IMR-90 (cell line): ENCODE measurements at regions of chr6 and their contacts with region 1.

Region 1: DNA sequence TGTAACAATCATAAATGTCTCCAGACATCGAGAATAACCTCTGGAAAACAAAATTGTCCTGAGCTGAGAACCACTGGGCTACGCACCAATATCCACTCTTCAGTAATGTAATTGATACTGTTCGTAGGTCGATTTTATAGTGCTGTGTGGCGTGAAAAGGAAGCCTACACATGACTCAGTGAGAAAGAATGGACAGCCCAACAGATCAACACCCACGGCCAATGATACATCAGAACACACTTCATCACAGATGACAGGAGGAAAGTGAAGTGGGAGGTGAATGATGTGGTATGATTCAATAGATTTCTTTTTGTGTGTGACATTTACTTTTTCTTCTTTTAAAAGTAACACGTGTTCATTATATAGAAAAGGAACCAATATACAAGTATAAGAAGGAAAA is 93.5 kb downstream of the RPS12 start:
- DNase-seq: peak; percentile 93
- ATAC-seq: peak; percentile 79
- H3K4me3 ChIP-seq: no peak overlapping the region
- H3K27ac ChIP-seq: no peak overlapping the region
- H3K4me1 ChIP-seq: peaks cover 11% of the 10 kb centered on the region
- H3K27me3 ChIP-seq: no peaks in the 10 kb centered on the region
- CTCF ChIP-seq: no peak
- POLR2A ChIP-seq: no peak
- RAD21 ChIP-seq: no peak

Region 2: GRCh38 chr6:132730560-132730959 is 177.4 kb before region 1 on chr6:
- CTCF ChIA-PET with region 1: no interaction called
- POLR2A ChIA-PET with region 1: no interaction called
- dilution Hi-C with region 1: no loop called
- in situ Hi-C with region 1: no loop called
- intact Hi-C with region 1: no loop called
- DNase-seq: peak; percentile 94
- ATAC-seq: peak; percentile 88
- H3K4me3 ChIP-seq: no peak overlapping the region
- H3K27ac ChIP-seq: no peak overlapping the region
- H3K4me1 ChIP-seq: peaks cover 18% of the 10 kb centered on the region
- H3K27me3 ChIP-seq: no peaks in the 10 kb centered on the region
- CTCF ChIP-seq: no peak
- POLR2A ChIP-seq: no peak
- RAD21 ChIP-seq: no peak

Region 3: DNA sequence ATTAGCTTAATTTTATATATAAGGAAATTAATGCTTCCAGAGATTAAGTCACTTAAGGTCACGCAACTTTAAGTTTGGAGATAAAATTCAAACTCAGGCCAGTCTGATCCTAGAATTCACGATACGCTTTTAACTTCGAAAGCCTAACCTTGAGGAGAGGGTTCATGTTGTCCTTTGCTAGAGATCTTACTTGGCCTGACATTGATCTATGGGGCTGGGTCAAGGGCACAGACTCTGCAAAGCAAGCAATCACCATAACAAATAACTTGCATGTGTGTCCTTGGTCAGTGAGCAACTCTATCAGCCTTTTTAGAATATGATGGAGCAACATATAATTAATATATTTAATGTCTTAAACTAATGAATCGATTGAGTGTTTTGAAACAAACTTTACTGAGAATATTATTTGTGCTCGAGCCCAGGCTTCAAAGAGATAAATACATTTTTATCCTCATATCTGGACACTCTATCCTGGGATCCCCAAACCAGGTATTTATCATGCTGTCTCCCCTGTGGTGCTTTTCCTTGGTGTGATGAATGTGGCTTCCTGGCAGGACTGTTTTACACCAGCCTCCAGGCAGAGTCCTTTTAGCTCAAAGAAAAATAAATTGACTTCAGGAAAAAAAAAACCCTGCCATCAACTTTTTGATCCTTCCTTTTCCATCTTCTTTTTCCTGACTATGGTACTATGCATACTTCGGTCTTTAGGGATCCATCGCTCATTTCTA is 64.4 kb before region 1 on chr6:
- CTCF ChIA-PET with region 1: no interaction called
- POLR2A ChIA-PET with region 1: no interaction called
- dilution Hi-C with region 1: no loop called
- in situ Hi-C with region 1: no loop called
- intact Hi-C with region 1: no loop called
- DNase-seq: no peak
- ATAC-seq: no peak
- H3K4me3 ChIP-seq: no peak overlapping the region
- H3K27ac ChIP-seq: no peak overlapping the region
- H3K4me1 ChIP-seq: no peaks in the 10 kb centered on the region; the same call in 1 of the 2 replicates
- H3K27me3 ChIP-seq: no peaks in the 10 kb centered on the region
- CTCF ChIP-seq: no peak
- POLR2A ChIP-seq: no peak
- RAD21 ChIP-seq: no peak

Region 4: DNA sequence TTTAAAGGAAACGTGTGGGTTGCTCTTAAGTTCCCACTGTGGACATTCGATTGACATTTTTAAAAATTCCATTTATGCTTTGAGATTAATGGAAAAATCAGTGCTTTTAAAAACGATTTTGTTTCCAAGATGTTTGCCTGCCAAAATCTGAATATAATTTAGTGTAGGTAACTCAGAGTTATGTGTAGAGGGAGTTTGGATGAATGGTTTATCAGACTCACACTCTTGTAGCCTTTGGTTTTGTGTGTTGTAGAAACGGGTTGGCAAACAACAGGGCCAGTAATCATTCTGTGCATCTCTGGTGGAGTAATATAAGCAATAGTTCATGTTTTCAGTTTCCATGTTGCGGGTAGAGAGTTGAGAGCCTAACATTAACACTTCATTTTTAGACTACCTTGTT is 47.0 kb after region 1 on chr6:
- CTCF ChIA-PET with region 1: no interaction called
- POLR2A ChIA-PET with region 1: interaction called, 23 read pairs
- dilution Hi-C with region 1: no loop called
- in situ Hi-C with region 1: no loop called
- intact Hi-C with region 1: no loop called
- DNase-seq: no peak
- ATAC-seq: no peak
- H3K4me3 ChIP-seq: no peak overlapping the region
- H3K27ac ChIP-seq: no peak overlapping the region
- H3K4me1 ChIP-seq: no peaks in the 10 kb centered on the region
- H3K27me3 ChIP-seq: no peaks in the 10 kb centered on the region
- CTCF ChIP-seq: no peak
- POLR2A ChIP-seq: no peak
- RAD21 ChIP-seq: no peak